ENCODE measurements at regions of chr4 and their contacts with region 1.

Region 1: GRCh38 chr4:75630174-75630936 is at the start of gene CDKL2:
- DNase-seq: peak; percentile 89
- H3K4me3 Mint-ChIP-seq: peak within 1 kb of the TSS; percentile 86
- H3K27ac Mint-ChIP-seq: peak within 1 kb of the TSS; percentile 40
- H3K4me1 Mint-ChIP-seq: peaks cover 20% of the 10 kb centered on the region
- H3K27me3 Mint-ChIP-seq: peaks cover 11% of the 10 kb centered on the region
- total RNA-seq, gene CDKL2: 0.16 and 0.22 TPM in 2 replicates

Region 2: GRCh38 chr4:75612306-75612705 is 18.0 kb before region 1 on chr4:
- intact Hi-C with region 1: no loop called
- DNase-seq: no peak
- H3K4me3 Mint-ChIP-seq: no peak overlapping the region
- H3K27ac Mint-ChIP-seq: no peak overlapping the region
- H3K4me1 Mint-ChIP-seq: peaks cover 6% of the 10 kb centered on the region
- H3K27me3 Mint-ChIP-seq: peaks cover 3% of the 10 kb centered on the region

Region 3: DNA sequence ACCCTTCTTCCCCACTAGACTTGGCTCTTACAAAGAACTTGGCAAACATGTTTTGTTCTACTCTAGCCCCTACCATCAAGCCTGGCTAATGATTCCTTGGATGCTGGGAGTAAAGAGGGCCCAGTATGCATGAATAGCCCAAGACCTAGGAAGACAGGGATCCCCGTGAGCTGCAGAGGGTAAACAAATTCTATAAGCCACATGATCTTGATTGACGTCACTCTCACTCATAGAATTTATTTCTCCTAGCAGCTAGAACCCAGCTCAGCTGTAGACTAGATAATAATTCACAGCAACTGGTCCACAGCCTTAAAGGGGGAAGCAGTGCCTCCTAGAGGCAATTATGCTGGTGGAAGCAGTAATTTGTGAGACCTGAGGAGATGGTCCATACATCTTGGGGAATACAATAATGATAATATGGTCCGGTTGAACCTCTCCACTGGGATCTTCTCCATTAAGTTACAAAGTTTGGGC is 77.9 kb after region 1 on chr4:
- intact Hi-C with region 1: loop called (anchors 5 kb)
- DNase-seq: peak; percentile 38
- H3K4me3 Mint-ChIP-seq: no peak overlapping the region
- H3K27ac Mint-ChIP-seq: no peak overlapping the region
- H3K4me1 Mint-ChIP-seq: peaks cover 8% of the 10 kb centered on the region
- H3K27me3 Mint-ChIP-seq: no peaks in the 10 kb centered on the region

Measured in activated T-helper 1 cell treated with anti-CD3 and anti-CD28 coated beads, Interleukin-12 subunit alpha, Interleukin-12 subunit beta, Interleukin-2, Interleukin-4 antibody, amounts not matched to agents 30 ng/mL and 10 ng/mL and 1 ng/mL, durations not matched to agents 14 hours and 24 hours and 36 hours (primary cell).